IMR-90 (cell line): ENCODE measurements at regions of chr3 and their contacts with region 1.

Region 1: GRCh38 chr3:170221924-170222646 is at the start of gene PRKCI:
- DNase-seq: peak; percentile 96
- ATAC-seq: peak; percentile 96
- H3K4me3 ChIP-seq: peak within 1 kb of the TSS; percentile 100
- H3K27ac ChIP-seq: peak within 1 kb of the TSS; percentile 98
- H3K4me1 ChIP-seq: peaks cover 10% of the 10 kb centered on the region
- H3K27me3 ChIP-seq: no peaks in the 10 kb centered on the region
- CTCF ChIP-seq: no peak
- POLR2A ChIP-seq: 0 out of 2 replicates have a peak, but pooled peaks have one; percentile 36
- RAD21 ChIP-seq: no peak
- total RNA-seq, gene PRKCI: 53.4 and 84.2 TPM in 2 replicates

Region 2: DNA sequence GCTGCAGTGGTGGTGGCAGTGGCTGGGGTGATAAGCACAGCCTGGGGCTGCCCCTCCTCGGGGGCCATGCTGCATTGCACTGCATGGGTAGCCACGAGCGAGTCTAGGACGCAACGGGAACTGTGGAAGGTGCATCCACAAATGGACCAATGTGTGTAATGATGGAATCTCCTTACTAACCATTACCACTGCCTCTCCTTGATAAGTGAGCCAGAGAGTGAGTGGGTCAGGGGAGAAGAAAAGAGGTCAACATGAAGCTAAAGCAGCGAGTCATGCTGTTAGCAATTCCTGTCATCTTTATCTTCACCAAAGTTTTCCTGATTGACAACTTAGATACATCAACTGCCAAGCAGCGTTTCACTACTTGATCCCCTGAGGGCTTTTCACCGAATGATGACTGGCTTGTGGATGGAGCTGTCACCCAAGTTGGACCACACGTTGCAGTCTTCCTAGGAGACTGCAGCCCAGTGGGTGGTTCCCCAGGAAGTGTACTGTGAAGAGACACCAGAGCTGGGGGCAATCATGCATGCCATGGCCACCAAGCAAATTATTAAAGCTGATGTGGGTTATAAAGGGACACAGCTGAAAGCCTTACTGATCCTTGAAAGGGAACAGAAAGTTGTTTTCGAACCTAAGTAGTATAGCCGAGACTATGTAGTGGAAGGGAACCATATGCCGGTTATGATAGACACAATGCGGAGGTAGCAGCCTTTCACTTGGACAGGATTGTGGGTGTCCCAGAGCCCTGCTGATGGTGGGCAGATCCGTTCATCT is 290.2 kb before region 1 on chr3:
- CTCF ChIA-PET with region 1: no interaction called
- POLR2A ChIA-PET with region 1: no interaction called
- dilution Hi-C with region 1: no loop called
- in situ Hi-C with region 1: no loop called
- intact Hi-C with region 1: no loop called
- DNase-seq: no peak
- ATAC-seq: no peak
- H3K4me3 ChIP-seq: no peak overlapping the region
- H3K27ac ChIP-seq: no peak overlapping the region
- H3K4me1 ChIP-seq: no peaks in the 10 kb centered on the region
- H3K27me3 ChIP-seq: peaks cover 23% of the 10 kb centered on the region
- CTCF ChIP-seq: no peak
- POLR2A ChIP-seq: no peak
- RAD21 ChIP-seq: no peak

Region 3: DNA sequence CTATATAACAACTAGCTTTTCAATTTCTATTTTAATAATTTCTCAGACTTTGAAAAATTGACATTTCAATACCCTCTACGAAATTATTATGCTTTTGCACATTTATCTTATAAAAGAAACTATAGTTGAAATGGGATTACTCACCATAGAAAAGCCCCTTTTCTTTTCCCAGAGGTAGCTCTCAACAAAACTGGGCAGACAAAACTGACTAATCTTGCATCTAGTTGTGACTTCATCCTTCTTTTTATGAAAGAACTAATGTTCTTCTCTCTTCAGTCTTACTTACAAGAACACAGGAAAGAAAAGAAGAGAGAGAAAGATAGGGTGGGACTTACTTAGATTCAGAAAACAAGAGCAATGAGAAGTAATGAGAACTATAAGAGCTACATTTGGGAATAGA is 123.3 kb before region 1 on chr3:
- CTCF ChIA-PET with region 1: no interaction called
- POLR2A ChIA-PET with region 1: no interaction called
- dilution Hi-C with region 1: no loop called
- in situ Hi-C with region 1: no loop called
- intact Hi-C with region 1: no loop called
- DNase-seq: peak; percentile 35
- ATAC-seq: no peak
- H3K4me3 ChIP-seq: no peak overlapping the region
- H3K27ac ChIP-seq: no peak overlapping the region
- H3K4me1 ChIP-seq: no peaks in the 10 kb centered on the region
- H3K27me3 ChIP-seq: no peaks in the 10 kb centered on the region
- CTCF ChIP-seq: no peak
- POLR2A ChIP-seq: no peak
- RAD21 ChIP-seq: no peak

Region 4: GRCh38 chr3:170189398-170190256 is 32.5 kb before region 1 on chr3:
- CTCF ChIA-PET with region 1: no interaction called
- POLR2A ChIA-PET with region 1: no interaction called
- dilution Hi-C with region 1: no loop called
- in situ Hi-C with region 1: no loop called
- intact Hi-C with region 1: loop called (anchors 2 kb)
- DNase-seq: no peak
- ATAC-seq: peak; percentile 73
- H3K4me3 ChIP-seq: no peak overlapping the region
- H3K27ac ChIP-seq: no peak overlapping the region
- H3K4me1 ChIP-seq: peaks cover 5% of the 10 kb centered on the region; the same call in 1 of the 2 replicates
- H3K27me3 ChIP-seq: no peaks in the 10 kb centered on the region
- CTCF ChIP-seq: no peak
- POLR2A ChIP-seq: no peak
- RAD21 ChIP-seq: no peak

Region 5: GRCh38 chr3:170205302-170205701 is 16.8 kb before region 1 on chr3:
- CTCF ChIA-PET with region 1: interaction called, 4 read pairs
- POLR2A ChIA-PET with region 1: interaction called, 12 read pairs
- dilution Hi-C with region 1: no loop called
- in situ Hi-C with region 1: no loop called
- intact Hi-C with region 1: no loop called
- DNase-seq: no peak
- ATAC-seq: no peak
- H3K4me3 ChIP-seq: no peak overlapping the region
- H3K27ac ChIP-seq: no peak overlapping the region
- H3K4me1 ChIP-seq: no peaks in the 10 kb centered on the region
- H3K27me3 ChIP-seq: no peaks in the 10 kb centered on the region
- CTCF ChIP-seq: no peak
- POLR2A ChIP-seq: no peak
- RAD21 ChIP-seq: no peak